ENCODE measurements at regions of chr5 and their contacts with region 1.

Region 1: GRCh38 chr5:80904533-80905187 is 55.5 kb upstream of the RASGRF2 start:
- DNase-seq: no peak
- ATAC-seq: no peak

Region 2: DNA sequence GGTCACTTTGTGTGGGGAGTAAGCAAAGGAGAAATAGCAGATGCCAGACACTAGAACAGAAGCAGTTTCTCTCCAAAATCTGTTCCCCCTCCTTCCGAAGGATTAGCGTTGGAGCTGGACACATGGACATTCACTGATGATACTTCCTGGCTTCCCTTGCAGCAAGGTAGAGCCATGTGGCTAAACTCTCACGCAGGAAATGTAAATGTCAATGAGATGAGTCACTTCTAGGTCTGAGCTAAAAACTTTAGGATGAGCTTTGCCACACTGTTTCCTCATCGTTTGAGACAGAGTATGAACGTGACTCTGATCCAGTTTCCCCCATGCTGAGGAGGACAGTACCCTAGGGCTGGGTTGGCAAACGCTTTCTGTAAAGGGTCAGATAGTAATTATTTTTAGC is 1830.0 kb before region 1 on chr5:
- intact Hi-C with region 1: loop called (anchors 5 kb)
- DNase-seq: no peak
- ATAC-seq: no peak

Region 3: DNA sequence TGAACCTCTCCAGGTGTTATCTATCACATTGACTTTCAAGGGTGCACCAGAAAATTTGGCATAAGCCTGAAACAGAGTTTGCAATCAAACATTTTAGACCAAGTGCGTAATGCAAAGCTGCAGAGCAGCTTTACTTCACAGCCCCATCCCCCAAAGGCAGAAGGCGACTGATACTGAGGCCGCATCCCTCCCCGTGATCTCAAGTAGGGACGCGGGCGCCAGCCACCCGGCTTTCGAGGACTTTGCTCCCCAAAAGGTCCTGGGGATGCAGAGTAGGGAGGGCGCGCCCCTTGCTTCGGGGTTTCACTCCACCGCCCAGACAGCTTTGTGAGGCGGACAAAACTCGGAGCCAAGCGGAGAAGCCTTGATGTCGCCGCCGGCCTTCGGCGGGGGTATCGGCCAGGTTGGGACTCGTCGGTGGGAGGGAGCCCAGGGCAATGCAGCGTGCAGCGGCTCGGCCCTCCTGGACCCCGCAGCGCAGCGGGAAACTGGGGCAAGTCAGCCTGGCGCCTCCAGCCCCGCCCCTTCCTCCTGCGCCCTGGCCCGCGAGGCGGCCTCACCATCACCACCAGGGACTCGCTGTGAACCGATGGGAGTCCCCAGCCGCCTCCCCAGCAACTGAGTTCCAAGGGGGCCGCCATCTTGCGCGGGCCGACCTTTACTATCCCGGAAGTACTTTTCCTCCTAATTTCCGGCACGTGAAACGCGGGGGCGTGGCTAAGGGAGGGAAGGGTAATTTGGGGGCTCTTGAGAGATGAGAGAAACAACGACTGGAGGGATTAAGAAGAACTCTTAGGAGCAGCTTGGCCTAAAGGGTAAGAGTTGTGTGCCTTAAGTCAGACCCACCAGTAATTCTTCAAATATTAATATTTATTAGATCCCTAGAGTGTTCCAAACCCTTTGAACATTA is 913.8 kb before region 1 on chr5 and contains the start of gene MTX3:
- intact Hi-C with region 1: no loop called
- DNase-seq: peak; percentile 92
- ATAC-seq: peak; percentile 99
- total RNA-seq, gene MTX3: 20.7 TPM

Region 4: DNA sequence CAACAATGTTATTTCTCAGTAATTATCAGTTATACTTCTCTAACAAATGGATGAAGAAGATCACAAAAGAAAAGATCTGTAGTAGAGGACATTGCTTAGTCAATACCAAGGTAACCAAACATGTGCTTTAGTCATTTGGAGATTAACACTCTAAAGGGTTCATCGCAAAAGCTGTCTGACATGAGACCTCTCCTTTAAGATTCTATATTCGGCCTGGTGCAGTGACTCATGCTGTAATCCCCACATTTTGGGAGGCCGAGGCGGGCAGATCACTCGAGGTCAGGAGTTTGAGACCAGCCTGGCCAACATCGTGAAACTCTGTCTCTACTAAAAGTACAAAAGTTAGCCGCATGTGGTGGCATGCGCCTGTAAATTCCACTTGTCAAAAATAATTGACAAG is 310.2 kb after region 1 on chr5:
- intact Hi-C with region 1: no loop called
- DNase-seq: no peak
- ATAC-seq: no peak

Region 5: GRCh38 chr5:82314964-82315758 is 1410.5 kb after region 1 on chr5:
- intact Hi-C with region 1: no loop called
- DNase-seq: no peak
- ATAC-seq: no peak

Measured in sciatic nerve (tissue), 2 donors.